SK-N-SH (cell line): ENCODE measurements at regions of chr7 and their contacts with region 1.

Region 1: DNA sequence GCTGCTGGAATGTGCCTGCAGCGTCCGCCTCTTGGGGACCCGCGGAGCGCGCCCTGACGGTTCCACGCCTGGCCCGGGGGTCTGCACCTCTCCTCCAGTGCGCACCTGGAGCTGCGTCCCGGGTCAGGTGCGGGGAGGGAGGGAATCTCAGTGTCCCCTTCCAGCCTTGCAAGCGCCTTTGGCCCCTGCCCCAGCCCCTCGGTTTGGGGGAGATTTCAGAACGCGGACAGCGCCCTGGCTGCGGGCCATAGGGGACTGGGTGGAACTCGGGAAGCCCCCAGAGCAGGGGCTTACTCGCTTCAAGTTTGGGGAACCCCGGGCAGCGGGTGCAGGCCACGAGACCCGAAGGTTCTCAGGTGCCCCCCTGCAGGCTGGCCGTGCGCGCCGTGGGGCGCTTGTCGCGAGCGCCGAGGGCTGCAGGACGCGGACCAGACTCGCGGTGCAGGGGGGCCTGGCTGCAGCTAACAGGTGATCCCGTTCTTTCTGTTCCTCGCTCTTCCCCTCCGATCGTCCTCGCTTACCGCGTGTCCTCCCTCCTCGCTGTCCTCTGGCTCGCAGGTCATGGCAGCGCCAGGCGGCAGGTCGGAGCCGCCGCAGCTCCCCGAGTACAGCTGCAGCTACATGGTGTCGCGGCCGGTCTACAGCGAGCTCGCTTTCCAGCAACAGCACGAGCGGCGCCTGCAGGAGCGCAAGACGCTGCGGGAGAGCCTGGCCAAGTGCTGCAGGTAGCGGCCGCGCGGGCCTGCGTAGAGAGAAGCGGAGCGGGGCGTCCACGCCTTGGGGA is 645 bp downstream of the SLC26A4 start:
- DNase-seq: peak; percentile 84
- H3K4me3 ChIP-seq: peak overlapping the region; percentile 65
- H3K27ac ChIP-seq: no peak overlapping the region
- H3K4me1 ChIP-seq: peaks cover 0 to 14% of the 10 kb centered on the region in 2 experiments; a peak in 1 of 4 replicates
- H3K27me3 ChIP-seq: peaks cover 15% of the 10 kb centered on the region
- CTCF ChIP-seq: no peak
- EP300 ChIP-seq: no peak
- RAD21 ChIP-seq: peak; percentile 52

Region 2: DNA sequence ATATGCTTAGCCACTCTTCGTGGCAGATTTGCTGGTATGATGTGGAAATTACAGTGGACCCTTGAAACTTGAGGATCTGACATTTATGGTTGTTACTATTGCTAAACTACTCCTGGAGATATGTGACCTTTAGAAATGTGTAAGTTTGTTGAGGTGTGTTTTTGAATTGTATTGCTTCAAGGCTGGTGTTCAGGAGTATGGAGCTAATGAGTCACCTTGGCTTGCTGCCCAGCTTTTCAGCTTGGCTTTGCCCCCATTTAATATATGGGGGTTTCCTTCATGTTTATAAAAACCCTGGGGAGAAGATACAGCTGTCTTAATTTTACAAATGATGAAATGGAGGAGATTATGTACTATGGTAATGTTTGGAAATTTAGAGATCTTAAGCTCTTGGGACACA is 480.9 kb before region 1 on chr7:
- CTCF ChIA-PET with region 1: no interaction called
- POLR2A ChIA-PET with region 1: no interaction called
- DNase-seq: no peak
- H3K4me3 ChIP-seq: no peak overlapping the region
- H3K27ac ChIP-seq: peak overlapping the region in 1 of 2 experiments; percentile 49; a peak in 2 of 4 replicates
- H3K4me1 ChIP-seq: peaks cover 0 to 18% of the 10 kb centered on the region in 2 experiments; a peak in 3 of 4 replicates
- H3K27me3 ChIP-seq: no peaks in the 10 kb centered on the region
- CTCF ChIP-seq: no peak
- EP300 ChIP-seq: no peak
- RAD21 ChIP-seq: no peak

Region 3: GRCh38 chr7:107538001-107538400 is 123.3 kb before region 1 on chr7:
- CTCF ChIA-PET with region 1: no interaction called
- POLR2A ChIA-PET with region 1: no interaction called
- DNase-seq: no peak
- H3K4me3 ChIP-seq: no peak overlapping the region
- H3K27ac ChIP-seq: no peak overlapping the region
- H3K4me1 ChIP-seq: no peaks in the 10 kb centered on the region
- H3K27me3 ChIP-seq: no peaks in the 10 kb centered on the region
- CTCF ChIP-seq: no peak
- EP300 ChIP-seq: no peak
- RAD21 ChIP-seq: no peak

Region 4: DNA sequence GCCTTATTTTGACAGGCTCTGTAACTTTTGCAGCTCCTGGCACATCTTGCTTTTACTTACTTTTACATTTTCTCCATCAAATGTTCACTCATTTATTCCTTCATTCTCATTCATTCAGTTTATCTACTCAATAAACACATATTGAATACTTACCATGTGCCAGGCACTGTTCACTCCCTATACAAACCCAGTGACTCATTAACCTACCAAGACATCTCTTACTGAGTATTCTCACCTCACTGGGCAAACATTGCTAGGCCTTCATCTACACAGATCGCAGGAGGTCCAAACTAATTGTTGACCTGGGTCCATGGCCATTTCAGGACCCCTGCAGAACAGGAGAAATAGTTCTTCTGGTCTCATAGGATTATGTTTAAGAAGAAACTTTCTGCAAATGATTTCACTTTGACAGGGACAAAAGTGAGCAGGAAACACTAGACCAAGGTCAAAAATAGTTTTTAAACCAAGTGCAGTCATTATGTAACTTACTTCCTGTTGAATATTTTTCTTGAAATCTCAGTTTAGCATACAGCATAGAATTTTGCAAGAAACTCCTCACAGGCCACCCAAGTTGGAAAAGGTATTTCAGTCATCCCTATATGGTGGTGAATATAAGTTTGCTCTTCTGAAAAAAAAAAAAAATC is 17.0 kb after region 1 on chr7:
- CTCF ChIA-PET with region 1: interaction called, 14 read pairs
- POLR2A ChIA-PET with region 1: no interaction called
- DNase-seq: no peak
- H3K4me3 ChIP-seq: no peak overlapping the region
- H3K27ac ChIP-seq: no peak overlapping the region
- H3K4me1 ChIP-seq: no peaks in the 10 kb centered on the region; a peak in 1 of 4 replicates
- H3K27me3 ChIP-seq: no peaks in the 10 kb centered on the region
- CTCF ChIP-seq: no peak
- EP300 ChIP-seq: no peak
- RAD21 ChIP-seq: no peak